Activated CD4-positive, alpha-beta T cell treated with anti-CD3 and anti-CD28 coated beads for 36 hours (primary cell): ENCODE measurements at regions of chr10 and their contacts with region 1.

Region 1: DNA sequence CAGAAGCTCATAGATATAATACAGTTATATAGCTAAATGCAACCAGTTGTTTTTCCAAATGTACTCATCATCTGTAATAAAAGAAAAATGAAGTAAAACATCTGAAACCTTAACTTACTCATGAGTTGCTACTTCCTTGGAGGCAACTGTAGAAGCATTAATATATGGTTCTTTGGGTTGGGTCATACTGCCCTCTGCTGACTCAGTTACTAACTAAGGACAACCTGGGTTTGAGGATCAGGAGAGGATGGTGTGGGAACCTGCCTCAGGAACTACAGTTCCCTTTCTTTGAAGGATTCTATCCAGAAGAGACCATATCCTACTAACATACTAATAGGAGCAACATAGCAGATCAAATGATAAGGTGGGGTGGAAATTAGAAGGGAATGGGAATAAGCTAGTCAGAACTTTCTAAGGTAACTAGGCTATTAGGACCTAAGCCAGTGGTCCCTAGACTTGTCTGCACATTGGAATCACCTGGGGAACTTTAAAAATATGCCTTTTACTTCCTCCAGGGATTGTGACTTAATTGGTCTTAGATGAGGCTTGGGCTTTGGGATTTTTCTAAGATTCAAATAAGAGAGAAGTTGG is 20.7 kb downstream of the COX15 start:
- DNase-seq: peak; percentile 57
- ATAC-seq: peak; percentile 63
- H3K4me3 Mint-ChIP-seq: no peak overlapping the region
- H3K27ac Mint-ChIP-seq: no peak overlapping the region
- H3K4me1 Mint-ChIP-seq: peaks cover 15% of the 10 kb centered on the region
- H3K27me3 Mint-ChIP-seq: no peaks in the 10 kb centered on the region

Region 2: GRCh38 chr10:99395750-99396445 is 315.3 kb before region 1 on chr10:
- CTCF ChIA-PET with region 1: no interaction called
- POLR2A ChIA-PET with region 1: no interaction called
- intact Hi-C with region 1: loop called (anchors 1 kb)
- DNase-seq: no peak
- ATAC-seq: no peak
- H3K4me3 Mint-ChIP-seq: no peak overlapping the region
- H3K27ac Mint-ChIP-seq: no peak overlapping the region
- H3K4me1 Mint-ChIP-seq: peaks cover 8% of the 10 kb centered on the region
- H3K27me3 Mint-ChIP-seq: no peaks in the 10 kb centered on the region

Region 3: DNA sequence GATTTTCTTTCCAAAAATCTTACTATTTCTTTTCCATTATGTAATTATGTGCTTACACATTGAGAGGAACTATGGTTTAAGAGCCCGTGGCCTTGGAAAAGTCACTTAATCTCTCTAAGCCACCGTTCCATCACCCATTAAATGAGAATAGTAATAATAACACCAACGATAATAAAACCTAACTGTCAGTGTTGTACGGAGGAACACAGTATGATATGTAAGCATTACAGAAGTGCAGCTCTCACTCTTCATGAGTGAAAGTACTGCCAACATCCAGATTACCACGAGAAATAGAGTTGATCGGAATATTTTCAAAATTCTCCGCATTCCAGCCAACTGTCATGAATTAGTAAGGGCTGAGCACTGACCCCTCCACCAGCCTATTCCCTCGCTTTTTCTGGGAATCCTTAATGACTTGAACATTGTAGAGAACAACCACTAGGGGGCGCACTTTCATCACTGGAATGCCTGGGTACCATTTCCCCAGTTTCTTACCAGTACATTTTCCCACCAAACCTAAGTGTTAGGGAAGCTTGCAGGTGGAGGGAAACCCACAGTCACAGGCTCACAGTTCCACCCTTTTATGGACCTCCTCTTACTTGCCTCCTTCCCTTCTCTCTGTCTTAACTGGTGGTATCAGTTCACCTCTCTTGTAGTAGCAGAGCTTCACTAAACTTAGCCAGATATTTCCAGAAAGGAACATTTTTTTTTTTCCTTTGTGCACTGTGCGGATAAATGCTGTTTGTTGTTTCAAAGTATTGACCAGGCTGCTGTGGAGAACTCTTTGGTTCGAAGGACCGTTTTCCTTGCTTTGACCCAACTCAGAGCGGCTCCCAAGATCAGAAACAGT is 150.7 kb before region 1 on chr10:
- CTCF ChIA-PET with region 1: interaction called, 6 read pairs
- POLR2A ChIA-PET with region 1: no interaction called
- intact Hi-C with region 1: loop called (anchors 1 kb)
- DNase-seq: peak; percentile 66
- ATAC-seq: no peak
- H3K4me3 Mint-ChIP-seq: no peak overlapping the region
- H3K27ac Mint-ChIP-seq: no peak overlapping the region
- H3K4me1 Mint-ChIP-seq: peaks cover 8% of the 10 kb centered on the region
- H3K27me3 Mint-ChIP-seq: peaks cover 20% of the 10 kb centered on the region

Region 4: DNA sequence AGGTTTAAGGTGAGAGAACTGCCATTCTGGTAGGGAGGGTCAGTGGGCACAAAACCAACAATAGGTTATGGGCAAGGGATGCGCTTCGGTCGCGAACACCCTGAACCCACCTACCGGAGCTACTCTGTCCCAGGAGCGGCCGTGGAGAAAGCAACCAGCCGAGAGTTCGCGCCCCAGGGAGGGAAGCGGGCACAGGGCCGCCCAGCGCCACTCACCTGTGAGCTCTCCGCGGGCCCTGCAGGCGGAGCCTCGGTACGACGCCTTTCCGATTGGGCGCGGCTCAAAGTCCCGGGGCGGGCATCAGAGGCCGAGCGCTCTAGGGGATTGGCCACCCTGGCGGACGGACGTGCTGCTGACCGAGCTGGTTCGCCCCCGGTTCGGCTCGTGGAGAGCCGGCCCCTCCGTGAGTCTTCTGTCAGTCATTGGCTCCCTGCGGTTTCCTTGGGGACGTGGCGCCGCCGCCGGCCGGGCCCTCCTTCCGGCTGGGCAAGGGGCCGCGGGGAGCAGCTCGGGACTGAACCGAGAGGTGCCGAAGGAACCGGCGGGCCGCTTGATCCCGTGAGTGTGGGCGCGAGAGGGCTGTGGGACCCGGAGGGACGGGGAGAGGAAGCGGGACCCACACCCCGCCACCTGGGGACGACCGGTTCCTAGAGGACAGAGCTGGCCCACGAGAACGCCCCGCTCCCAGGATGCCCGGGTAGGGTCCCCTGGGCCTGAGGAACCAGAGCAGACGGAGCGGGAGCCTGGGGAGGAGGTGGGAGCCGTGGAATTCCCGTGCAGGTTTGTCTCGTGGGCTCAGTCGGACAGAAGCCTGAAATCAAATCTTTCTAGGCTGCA is 52.0 kb before region 1 on chr10 and contains the start of gene ENTPD7:
- CTCF ChIA-PET with region 1: no interaction called
- POLR2A ChIA-PET with region 1: no interaction called
- intact Hi-C with region 1: loop called in 1 of 2 experiments (anchors 2 kb)
- DNase-seq: peak; percentile 96
- ATAC-seq: peak; percentile 99
- H3K4me3 Mint-ChIP-seq: peak within 1 kb of the TSS; percentile 84
- H3K27ac Mint-ChIP-seq: peak within 1 kb of the TSS; percentile 85
- H3K4me1 Mint-ChIP-seq: peaks cover 22% of the 10 kb centered on the region
- H3K27me3 Mint-ChIP-seq: peaks cover 12% of the 10 kb centered on the region
- total RNA-seq, gene ENTPD7: 2.5 to 2.7 TPM

Region 5: GRCh38 chr10:99693933-99694583 is 17.2 kb before region 1 on chr10:
- CTCF ChIA-PET with region 1: no interaction called
- POLR2A ChIA-PET with region 1: no interaction called
- intact Hi-C with region 1: no loop called
- DNase-seq: no peak
- ATAC-seq: no peak
- H3K4me3 Mint-ChIP-seq: no peak overlapping the region
- H3K27ac Mint-ChIP-seq: no peak overlapping the region
- H3K4me1 Mint-ChIP-seq: no peaks in the 10 kb centered on the region
- H3K27me3 Mint-ChIP-seq: no peaks in the 10 kb centered on the region

Region 6: DNA sequence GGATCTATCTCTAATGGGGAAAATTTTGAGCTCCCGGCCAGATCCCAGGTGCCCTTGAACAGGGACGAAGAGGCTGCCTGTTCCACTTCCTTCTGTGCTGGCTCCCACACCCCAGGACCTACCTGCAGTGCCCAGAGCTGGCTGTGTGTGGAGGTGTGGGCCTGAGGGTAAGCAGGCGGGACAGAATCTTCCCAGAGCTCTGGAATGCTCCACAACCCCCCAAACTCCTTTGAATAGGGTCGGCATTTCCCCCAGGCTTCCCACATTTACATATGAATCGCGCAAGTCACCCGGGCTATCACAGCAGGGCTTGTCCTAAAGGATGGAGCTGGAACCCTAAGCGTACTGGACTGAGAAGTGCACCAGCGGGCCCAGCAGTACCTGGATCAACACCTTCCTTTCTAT is 202.6 kb after region 1 on chr10:
- CTCF ChIA-PET with region 1: no interaction called
- POLR2A ChIA-PET with region 1: no interaction called
- intact Hi-C with region 1: no loop called
- DNase-seq: no peak
- ATAC-seq: no peak
- H3K4me3 Mint-ChIP-seq: no peak overlapping the region
- H3K27ac Mint-ChIP-seq: no peak overlapping the region
- H3K4me1 Mint-ChIP-seq: no peaks in the 10 kb centered on the region
- H3K27me3 Mint-ChIP-seq: no peaks in the 10 kb centered on the region

Region 7: DNA sequence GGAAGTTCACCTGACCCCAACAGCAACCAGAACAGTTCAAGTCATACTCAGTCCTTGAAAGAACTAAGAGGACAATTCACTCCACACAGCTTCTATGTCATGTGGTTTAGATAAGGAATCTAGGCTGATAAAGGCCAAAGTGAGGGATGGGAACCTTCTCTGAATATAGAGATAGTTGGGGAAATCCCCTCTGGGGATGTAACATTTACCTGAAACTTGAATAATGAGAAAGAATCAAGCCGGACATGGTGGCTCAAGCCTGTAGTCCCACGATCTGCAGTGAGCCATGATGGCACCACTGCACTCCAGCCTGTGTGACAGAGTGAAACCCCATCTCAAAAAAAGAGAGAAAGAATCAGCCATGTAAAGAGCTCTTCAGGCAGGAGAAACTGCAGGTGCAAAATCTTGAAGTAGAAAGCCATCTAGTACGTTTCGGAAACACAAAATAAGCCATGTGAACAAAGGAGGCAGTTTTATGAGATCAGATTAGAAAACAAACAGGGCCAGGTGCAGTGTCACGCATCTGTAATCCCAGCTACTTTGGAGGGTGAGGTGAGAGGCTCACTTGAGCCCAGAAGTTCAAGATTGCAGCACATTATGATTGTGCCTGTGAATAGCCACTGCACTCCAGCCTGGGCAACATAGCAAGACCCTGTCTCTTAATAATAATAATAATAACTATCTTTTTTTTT is 303.0 kb after region 1 on chr10:
- CTCF ChIA-PET with region 1: no interaction called
- POLR2A ChIA-PET with region 1: no interaction called
- intact Hi-C with region 1: no loop called
- DNase-seq: no peak
- ATAC-seq: no peak
- H3K4me3 Mint-ChIP-seq: no peak overlapping the region
- H3K27ac Mint-ChIP-seq: no peak overlapping the region
- H3K4me1 Mint-ChIP-seq: peaks cover 11% of the 10 kb centered on the region
- H3K27me3 Mint-ChIP-seq: peaks cover 7% of the 10 kb centered on the region